H1 (cell line): ENCODE measurements at regions of chr18 and their contacts with region 1.

Region 1: GRCh38 chr18:59139371-59140298 is at the start of gene SEC11C:
- DNase-seq: peak; percentile 91 to 94
- H3K4me3 ChIP-seq: peak within 1 kb of the TSS; percentile 59 to 91 (median 82)
- H3K27ac ChIP-seq: peak within 1 kb of the TSS; percentile 98
- H3K4me1 ChIP-seq: peaks cover 0 to 7% (median 2%) of the 10 kb centered on the region in 4 experiments; a peak in 4 of 7 replicates
- H3K27me3 ChIP-seq: no peaks in the 10 kb centered on the region
- CTCF ChIP-seq: no peak
- EP300 ChIP-seq: no peak
- POLR2A ChIP-seq: peak; percentile 51 to 55; a peak in 2 of 3 replicates
- RAD21 ChIP-seq: no peak
- total RNA-seq, gene SEC11C: 59.3 and 64.7 TPM in 2 replicates

Region 2: DNA sequence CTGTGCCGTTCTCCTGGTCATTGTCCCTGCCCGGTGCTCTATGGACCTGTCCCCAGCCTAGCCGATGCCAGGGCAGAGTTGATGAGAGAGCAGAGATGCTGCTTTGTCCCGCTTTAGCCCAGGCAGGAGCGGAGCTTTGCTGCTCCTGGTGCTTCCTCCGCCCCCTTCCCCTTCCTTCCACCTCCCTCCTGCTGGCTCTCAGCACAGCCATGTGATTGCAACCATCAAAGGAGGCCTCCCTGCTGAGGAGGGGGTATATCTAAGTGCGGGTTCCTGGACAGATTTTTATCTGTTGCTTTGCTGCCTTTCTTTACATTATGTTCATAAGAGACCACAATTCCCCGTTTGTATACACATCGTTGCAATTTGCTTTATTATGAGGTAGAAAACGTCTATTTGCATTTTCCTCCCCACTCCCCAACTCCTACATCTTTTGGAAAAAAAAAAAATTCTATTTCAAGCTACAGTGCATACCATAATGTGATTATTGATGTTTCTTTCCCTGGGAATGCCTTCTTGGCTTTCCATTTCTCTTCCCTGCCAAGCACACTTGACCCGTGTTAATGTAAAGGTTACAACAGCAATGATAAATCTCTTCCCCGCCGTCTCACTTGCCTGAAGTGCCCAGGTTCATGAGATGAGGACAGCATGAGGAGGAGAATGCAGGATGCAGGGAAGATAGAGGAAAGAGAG is 536.1 kb before region 1 on chr18:
- CTCF ChIA-PET with region 1: no interaction called
- POLR2A ChIA-PET with region 1: no interaction called
- DNase-seq: no peak
- H3K4me3 ChIP-seq: no peak overlapping the region
- H3K27ac ChIP-seq: no peak overlapping the region
- H3K4me1 ChIP-seq: peaks cover 0 to 6% (median 3%) of the 10 kb centered on the region in 4 experiments; a peak in 4 of 7 replicates
- H3K27me3 ChIP-seq: no peaks in the 10 kb centered on the region
- CTCF ChIP-seq: no peak
- EP300 ChIP-seq: no peak
- POLR2A ChIP-seq: no peak
- RAD21 ChIP-seq: no peak

Region 3: DNA sequence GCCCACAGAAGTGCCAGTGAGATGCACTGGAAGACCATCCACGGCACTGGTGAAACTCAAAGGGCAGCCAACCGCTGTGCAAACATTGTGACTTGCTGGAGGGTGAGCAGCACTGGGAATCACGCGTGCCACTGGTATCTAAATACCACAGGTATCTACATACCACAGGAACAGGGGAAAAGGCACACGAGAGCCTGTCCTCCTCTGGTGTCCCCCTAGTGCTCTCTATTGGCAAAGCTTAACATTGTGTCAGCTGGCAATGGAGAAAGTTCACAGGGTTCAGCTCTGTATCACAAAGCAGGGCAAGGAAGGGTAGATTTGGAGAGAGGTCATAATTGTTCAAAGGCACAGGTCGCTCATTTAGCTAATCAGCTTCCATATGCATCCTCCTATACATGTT is 12.6 kb before region 1 on chr18:
- CTCF ChIA-PET with region 1: interaction called, 12 read pairs
- POLR2A ChIA-PET with region 1: no interaction called
- DNase-seq: no peak
- H3K4me3 ChIP-seq: no peak overlapping the region
- H3K27ac ChIP-seq: no peak overlapping the region
- H3K4me1 ChIP-seq: no peaks in the 10 kb centered on the region
- H3K27me3 ChIP-seq: no peaks in the 10 kb centered on the region
- CTCF ChIP-seq: peak; percentile 14 to 51 (median 35); a peak in 2 of 4 replicates
- EP300 ChIP-seq: no peak
- POLR2A ChIP-seq: no peak
- RAD21 ChIP-seq: peak; percentile 30 to 43; a peak in 2 of 4 replicates